Left colon (tissue), 2 donors: ENCODE measurements at regions of chr12 and their contacts with region 1.

Region 1: GRCh38 chr12:21438643-21439042 is 1.2 kb downstream of the PYROXD1 start:
- DNase-seq: no peak
- ATAC-seq: no peak

Region 2: DNA sequence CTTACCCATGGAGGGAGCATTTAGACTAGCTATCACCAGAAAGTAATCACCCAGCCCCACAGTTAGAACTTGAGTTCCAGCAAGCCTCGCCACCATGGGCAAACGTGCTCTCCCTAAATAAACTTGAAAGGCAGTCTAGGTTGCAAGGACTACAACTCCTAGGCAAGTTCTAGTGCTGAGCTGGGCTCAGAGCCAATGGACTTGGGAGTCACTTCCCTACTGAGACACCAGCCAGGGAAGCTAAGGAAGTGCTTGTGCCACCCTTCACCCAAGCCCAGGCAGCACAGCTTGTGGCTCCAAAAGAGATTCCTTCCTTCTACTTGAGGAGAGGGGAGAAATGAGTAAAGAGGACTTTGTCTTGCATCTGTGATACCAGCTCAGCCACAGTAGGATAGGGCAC is 161.8 kb before region 1 on chr12:
- intact Hi-C with region 1: no loop called
- DNase-seq: no peak
- ATAC-seq: no peak

Region 3: DNA sequence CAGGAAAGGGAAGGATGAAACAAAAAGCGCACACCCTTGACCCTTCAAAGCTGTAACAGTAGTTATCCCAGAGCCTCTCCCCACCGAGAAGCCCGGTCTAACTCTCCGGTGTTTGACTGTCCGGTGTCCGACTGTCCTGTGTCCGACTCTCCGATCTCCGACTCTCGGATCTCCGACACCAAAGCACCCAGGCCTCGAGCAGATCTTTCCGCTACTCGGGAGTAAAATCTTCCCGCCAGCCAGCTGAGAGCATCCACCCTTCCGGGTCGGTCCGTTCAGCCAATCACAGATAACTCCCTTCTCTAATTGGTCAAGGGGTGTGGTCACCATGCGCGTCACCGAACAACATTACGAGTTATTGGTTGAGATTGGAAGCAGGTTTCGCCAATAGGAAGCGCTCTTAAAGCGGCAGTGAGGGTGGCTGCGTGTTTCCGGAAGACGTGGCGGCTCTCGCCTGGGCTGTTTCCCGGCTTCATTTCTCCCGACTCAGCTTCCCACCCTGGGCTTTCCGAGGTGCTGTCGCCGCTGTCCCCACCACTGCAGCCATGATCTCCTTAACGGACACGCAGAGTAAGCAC is 62.8 kb after region 1 on chr12 and contains the starts of genes GOLT1B and RECQL:
- intact Hi-C with region 1: loop called in 1 of 2 experiments (anchors 10 kb)
- DNase-seq: peak; percentile 88 to 92
- ATAC-seq: peak; percentile 100
- total RNA-seq, gene GOLT1B: 18.6 to 23.3 TPM
- total RNA-seq, gene RECQL: 11.5 to 11.7 TPM